Activated T-helper 2 cell treated with anti-CD3 and anti-CD28 coated beads, Interferon-gamma antibody, Interleukin-2, Interleukin-4, amounts not matched to agents 10 μg/mL and 5 μg/mL and 100 μg/mL, durations not matched to agents 14 hours and 24 hours and 36 hours (primary cell): ENCODE measurements at regions of chr6 and their contacts with region 1.

Region 1: GRCh38 chr6:105992315-105992961 is 93.7 kb upstream of the PRDM1 start:
- DNase-seq: peak; percentile 89
- H3K4me3 Mint-ChIP-seq: peak overlapping the region; percentile 94
- H3K27ac Mint-ChIP-seq: peak overlapping the region; percentile 81
- H3K4me1 Mint-ChIP-seq: peaks cover 57% of the 10 kb centered on the region
- H3K27me3 Mint-ChIP-seq: peaks cover 23% of the 10 kb centered on the region

Region 2: GRCh38 chr6:105733565-105734162 is 258.8 kb before region 1 on chr6:
- intact Hi-C with region 1: loop called (anchors 5 kb)
- DNase-seq: no peak
- H3K4me3 Mint-ChIP-seq: no peak overlapping the region
- H3K27ac Mint-ChIP-seq: no peak overlapping the region
- H3K4me1 Mint-ChIP-seq: peaks cover 21% of the 10 kb centered on the region
- H3K27me3 Mint-ChIP-seq: peaks cover 2% of the 10 kb centered on the region

Region 3: GRCh38 chr6:105793130-105793529 is 199.3 kb before region 1 on chr6:
- intact Hi-C with region 1: loop called (anchors 5 kb)
- DNase-seq: no peak
- H3K4me3 Mint-ChIP-seq: no peak overlapping the region
- H3K27ac Mint-ChIP-seq: peak overlapping the region; percentile 34
- H3K4me1 Mint-ChIP-seq: peaks cover 86% of the 10 kb centered on the region
- H3K27me3 Mint-ChIP-seq: no peaks in the 10 kb centered on the region

Region 4: DNA sequence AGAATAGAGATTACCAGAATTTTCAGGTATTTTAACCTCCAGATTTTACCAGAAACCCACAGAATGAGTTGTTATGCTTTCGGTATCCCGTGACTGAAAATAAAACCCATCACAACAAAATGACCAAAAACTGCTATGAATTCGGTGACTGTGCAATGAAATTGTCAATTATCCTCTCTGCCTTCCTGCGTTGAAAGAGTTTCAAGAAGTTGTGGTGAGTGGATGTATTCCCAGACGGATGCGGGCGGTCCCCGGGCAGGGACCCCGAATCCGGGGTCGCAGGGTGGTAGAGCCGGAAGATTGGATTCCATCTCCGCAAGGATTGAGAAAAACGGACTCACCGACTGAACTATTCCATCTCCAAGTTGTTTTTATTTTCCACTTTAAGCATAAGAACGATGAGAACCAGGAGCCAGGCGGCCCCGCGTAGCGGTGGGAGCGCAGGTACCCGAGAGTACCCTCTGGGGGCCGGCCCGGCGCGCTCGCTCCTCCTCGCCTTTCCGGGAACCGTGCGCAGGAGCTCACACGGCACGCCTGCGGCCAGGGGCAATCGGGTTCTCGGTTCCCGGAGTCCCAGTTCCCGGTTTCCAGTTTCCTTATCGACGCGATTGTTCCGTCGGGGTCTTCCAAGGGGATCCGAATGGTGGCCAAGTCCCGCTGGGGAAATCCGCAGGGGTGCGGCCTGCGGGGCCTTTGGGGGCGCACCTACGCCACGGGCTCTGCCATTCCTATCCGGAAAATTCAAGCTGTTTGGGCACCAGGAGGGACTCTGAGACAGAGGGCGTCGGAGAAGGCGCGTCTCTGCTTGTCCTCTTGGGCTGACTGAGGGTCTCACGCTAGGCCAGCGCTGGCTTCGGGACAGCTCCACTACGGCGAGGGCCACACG is 11.2 kb before region 1 on chr6:
- intact Hi-C with region 1: loop called (anchors 1 kb)
- DNase-seq: peak; percentile 36
- H3K4me3 Mint-ChIP-seq: peak overlapping the region; percentile 74
- H3K27ac Mint-ChIP-seq: peak overlapping the region; percentile 85
- H3K4me1 Mint-ChIP-seq: peaks cover 56% of the 10 kb centered on the region
- H3K27me3 Mint-ChIP-seq: peaks cover 3% of the 10 kb centered on the region

Region 5: DNA sequence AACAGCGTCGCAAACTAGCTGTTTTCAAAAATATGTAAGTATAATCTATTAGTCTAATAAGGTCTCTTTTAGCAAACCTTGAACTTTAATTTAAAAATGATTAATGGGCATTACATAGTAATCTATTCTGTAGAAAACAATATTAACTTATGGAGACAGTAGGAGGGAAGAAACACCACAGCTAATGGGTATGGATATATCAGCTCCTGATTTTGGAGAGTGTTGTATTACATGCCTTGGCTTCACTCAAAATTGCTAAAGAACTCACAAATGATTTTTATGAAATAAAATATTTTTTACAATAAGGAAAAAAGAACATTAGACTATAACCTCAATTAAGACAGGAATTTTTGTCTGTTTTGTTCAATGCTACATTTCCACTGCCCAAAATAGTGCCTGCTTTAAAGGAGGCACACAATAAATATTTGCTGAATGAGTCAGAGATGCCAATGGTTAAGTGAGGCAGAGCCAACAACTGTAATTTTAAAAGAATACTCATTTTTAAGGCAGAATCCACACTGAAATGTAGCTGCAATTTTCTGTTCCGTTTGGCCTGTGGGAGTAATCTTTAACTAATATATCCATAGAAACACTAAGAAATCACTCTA is 317.4 kb after region 1 on chr6:
- intact Hi-C with region 1: loop called (anchors 5 kb)
- DNase-seq: no peak
- H3K4me3 Mint-ChIP-seq: no peak overlapping the region
- H3K27ac Mint-ChIP-seq: no peak overlapping the region
- H3K4me1 Mint-ChIP-seq: peaks cover 37% of the 10 kb centered on the region
- H3K27me3 Mint-ChIP-seq: no peaks in the 10 kb centered on the region